Sigmoid colon (tissue), 7 donors: ENCODE measurements at regions of chr5 and their contacts with region 1.

Region 1: DNA sequence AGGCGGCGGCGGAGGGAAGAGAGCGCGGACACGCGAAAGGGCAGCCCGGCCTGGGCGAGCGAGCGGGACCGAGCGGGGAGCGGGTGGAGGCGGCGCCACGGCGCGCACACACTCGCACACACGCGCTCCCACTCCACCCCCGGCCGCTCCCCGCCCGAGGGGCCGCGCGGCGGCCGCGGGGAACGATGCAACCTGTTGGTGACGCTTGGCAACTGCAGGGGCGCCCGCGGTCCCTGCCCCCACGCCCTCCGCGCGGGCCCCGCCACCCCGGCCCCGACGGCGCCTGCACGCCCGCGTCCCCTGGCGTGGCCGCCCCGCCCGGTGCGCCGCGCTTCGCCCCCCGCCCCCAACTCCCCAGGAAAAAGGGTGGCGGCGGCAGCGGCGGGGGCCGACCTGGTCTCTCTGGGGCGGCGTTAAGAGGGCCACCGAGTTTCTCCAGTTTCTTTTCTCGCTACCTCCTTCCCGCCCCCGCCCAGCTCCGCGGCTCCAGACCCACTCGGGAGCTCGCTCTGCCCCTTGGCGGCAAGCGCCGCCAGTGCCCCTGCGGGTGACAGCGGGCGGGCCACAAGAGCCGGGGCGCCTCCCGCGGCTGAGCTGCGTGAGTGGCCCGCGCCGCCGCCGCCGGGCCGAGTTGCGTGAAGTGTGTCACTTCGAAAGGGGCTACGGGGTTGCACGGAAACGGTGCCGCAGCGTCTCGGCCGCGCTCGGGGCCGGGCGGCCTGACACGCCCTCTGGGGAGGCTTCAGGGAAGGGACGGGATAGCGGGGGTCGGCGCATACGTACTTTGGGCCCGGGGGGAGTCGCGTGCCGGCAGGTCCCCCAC is at the start of gene NR3C1:
- DNase-seq: peak; percentile 94
- H3K4me3 ChIP-seq: peak within 1 kb of the TSS; percentile 84 to 89 (median 88)
- H3K27ac ChIP-seq: peak within 1 kb of the TSS; percentile 99
- H3K4me1 ChIP-seq: peaks cover 0 to 39% (median 31%) of the 10 kb centered on the region in 4 donors
- H3K27me3 ChIP-seq: no peaks in the 10 kb centered on the region
- CTCF ChIP-seq: peak in 3 of 4 experiments; percentile 33 to 44 (median 38)
- EP300 ChIP-seq: no peak
- POLR2A ChIP-seq: no peak
- total RNA-seq, gene NR3C1: 36.0 to 65.6 (median 49.9) TPM

Region 2: GRCh38 chr5:142769741-142770631 is 633.8 kb before region 1 on chr5 and contains the start of gene ARHGAP26:
- intact Hi-C with region 1: loop called (anchors 10 kb)
- DNase-seq: peak; percentile 99
- H3K4me3 ChIP-seq: peak within 1 kb of the TSS; percentile 61 to 81 (median 68)
- H3K27ac ChIP-seq: peak within 1 kb of the TSS; percentile 86 to 92 (median 90)
- H3K4me1 ChIP-seq: peaks cover 0 to 20% (median 10%) of the 10 kb centered on the region in 4 donors
- H3K27me3 ChIP-seq: no peaks in the 10 kb centered on the region
- CTCF ChIP-seq: peak in 1 of 4 experiments; percentile 38
- EP300 ChIP-seq: no peak
- POLR2A ChIP-seq: peak; percentile 89 to 97
- total RNA-seq, gene ARHGAP26: 13.3 to 25.5 (median 21.7) TPM

Region 3: GRCh38 chr5:143002459-143003328 is 401.1 kb before region 1 on chr5:
- intact Hi-C with region 1: loop called (anchors 5 kb)
- DNase-seq: no peak
- H3K4me3 ChIP-seq: no peak overlapping the region
- H3K27ac ChIP-seq: peak overlapping the region; percentile 14 to 60 (median 48)
- H3K4me1 ChIP-seq: peaks cover 0 to 28% (median 27%) of the 10 kb centered on the region in 4 donors
- H3K27me3 ChIP-seq: no peaks in the 10 kb centered on the region
- CTCF ChIP-seq: peak in 3 of 4 experiments; percentile 34 to 48 (median 43)
- EP300 ChIP-seq: peak in 2 of 4 donors; percentile 23 to 51
- POLR2A ChIP-seq: no peak

Region 4: GRCh38 chr5:143094087-143094521 is 309.7 kb before region 1 on chr5:
- intact Hi-C with region 1: no loop called
- DNase-seq: no peak
- H3K4me3 ChIP-seq: peak overlapping the region in 2 of 4 donors; percentile 22
- H3K27ac ChIP-seq: no peak overlapping the region
- H3K4me1 ChIP-seq: no peaks in the 10 kb centered on the region
- H3K27me3 ChIP-seq: no peaks in the 10 kb centered on the region
- CTCF ChIP-seq: no peak
- EP300 ChIP-seq: no peak
- POLR2A ChIP-seq: no peak

Region 5: DNA sequence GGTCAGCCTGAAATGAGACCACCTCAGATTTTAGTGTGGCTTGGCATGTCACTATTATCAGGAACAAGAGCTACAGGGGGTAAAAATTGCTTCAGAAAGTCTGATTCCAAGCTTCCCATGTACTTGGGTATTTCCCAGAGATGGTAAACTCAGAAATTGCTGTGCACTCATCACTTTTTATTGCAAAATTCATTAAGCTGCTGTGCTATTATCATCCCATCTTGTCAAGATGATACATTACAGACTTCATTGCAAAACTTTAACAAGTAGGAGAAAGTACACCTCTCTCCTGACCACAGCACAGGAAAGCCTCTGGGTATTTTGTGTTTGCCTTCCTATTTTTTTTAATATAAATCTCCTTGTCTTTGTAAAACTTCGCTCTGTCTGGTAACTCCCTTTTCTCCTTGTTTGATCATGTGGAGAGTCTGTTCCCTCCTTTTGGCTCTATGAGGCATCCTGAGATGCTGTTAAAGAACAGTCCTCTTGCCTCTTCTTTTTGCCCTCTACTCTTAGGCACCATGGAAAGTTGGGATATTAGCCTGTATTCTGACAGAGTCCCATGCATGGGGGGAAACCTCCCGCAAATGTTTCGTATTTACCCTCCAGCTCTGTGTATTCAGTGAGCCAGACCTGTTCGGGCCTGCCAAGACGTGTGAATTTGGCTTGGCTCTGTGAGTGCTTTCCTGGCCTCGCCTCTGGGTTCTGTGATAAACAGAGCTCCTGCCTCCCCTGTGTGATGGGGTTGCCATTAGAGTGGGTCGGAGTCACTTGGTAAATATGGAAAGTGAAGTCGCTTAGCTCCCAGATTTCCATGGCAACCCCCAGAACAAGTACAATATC is 261.0 kb before region 1 on chr5:
- intact Hi-C with region 1: loop called (anchors 5 kb)
- DNase-seq: peak; percentile 81
- H3K4me3 ChIP-seq: no peak overlapping the region
- H3K27ac ChIP-seq: peak overlapping the region; percentile 66 to 77 (median 70)
- H3K4me1 ChIP-seq: peaks cover 0 to 45% (median 38%) of the 10 kb centered on the region in 4 donors
- H3K27me3 ChIP-seq: no peaks in the 10 kb centered on the region
- CTCF ChIP-seq: no peak
- EP300 ChIP-seq: peak; percentile 39 to 76 (median 61)
- POLR2A ChIP-seq: no peak

Region 6: DNA sequence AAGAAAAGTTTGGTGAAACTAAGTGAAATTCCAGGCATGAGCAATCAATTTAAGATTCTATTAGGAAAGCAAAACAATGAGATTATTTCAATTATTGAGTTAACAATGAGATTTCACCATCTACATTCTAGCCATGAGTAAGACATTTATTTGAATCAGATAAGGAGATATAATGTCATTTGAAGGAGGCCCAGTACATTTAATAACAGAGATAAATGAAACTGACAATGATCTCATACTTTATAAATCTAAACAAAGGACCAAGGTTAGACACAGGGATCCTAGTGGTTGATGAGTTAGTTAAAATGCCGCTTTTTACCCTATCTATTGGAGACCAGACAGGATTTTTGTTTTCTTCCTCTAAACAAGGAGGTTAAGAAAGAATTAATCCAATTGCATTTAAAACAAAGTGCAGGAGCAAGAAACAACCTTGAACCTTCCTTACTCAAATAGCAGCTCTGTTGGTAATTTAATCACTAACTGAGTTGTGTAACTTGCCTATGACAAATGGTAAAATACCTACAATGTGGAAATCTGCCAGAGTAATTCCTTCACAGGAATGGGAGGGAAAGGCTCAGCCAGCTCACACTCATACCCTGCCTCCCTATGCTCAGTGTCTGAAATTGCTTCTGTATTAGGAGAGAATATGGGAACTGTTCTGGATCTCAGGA is 103.2 kb after region 1 on chr5:
- intact Hi-C with region 1: loop called (anchors 5 kb)
- DNase-seq: no peak
- H3K4me3 ChIP-seq: no peak overlapping the region
- H3K27ac ChIP-seq: peak overlapping the region in 3 of 4 donors; percentile 59 to 65 (median 60)
- H3K4me1 ChIP-seq: peaks cover 0 to 20% (median 14%) of the 10 kb centered on the region in 4 donors
- H3K27me3 ChIP-seq: no peaks in the 10 kb centered on the region
- CTCF ChIP-seq: no peak
- EP300 ChIP-seq: no peak
- POLR2A ChIP-seq: no peak

Region 7: GRCh38 chr5:143796753-143797152 is 392.9 kb after region 1 on chr5:
- intact Hi-C with region 1: no loop called
- DNase-seq: no peak
- H3K4me3 ChIP-seq: no peak overlapping the region
- H3K27ac ChIP-seq: no peak overlapping the region
- H3K4me1 ChIP-seq: no peaks in the 10 kb centered on the region
- H3K27me3 ChIP-seq: no peaks in the 10 kb centered on the region
- CTCF ChIP-seq: no peak
- EP300 ChIP-seq: no peak
- POLR2A ChIP-seq: no peak

Region 8: DNA sequence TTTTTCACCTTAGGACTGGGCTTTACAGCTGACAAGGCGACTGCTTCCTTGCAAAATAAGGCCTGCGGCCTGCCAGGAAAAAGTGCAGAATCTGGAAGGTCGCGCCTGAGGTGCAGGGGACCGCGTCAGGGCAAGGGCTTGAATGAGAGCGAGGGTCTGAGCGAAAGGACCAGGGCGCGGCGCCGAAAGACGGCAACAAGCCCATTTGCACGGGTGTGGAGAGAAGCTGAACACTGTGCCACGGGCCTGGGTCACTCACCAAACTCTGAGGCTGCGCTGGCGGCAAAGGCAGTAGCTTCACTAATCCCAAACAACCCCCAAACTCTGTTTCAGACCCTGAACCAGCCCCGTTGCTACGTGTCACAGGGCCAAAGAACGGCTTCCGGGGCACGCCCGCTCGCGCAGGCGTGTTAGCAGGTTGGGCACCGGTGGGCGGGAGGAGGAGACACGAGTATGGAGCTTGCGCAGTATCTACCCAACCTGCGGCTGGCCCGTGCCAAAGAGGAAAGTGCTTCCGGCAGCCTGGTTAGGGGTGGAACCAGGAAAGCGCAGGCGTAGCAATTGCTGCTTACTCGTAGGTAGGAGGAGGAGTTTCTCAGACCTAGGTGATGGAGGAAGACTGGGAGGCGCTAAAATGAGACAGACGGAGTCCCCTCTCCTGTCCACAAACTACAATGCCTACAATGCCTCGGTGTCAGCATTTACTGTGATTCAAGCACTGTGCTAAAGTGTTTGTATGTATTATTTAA is 766.6 kb after region 1 on chr5 and contains the starts of genes KCTD16 and YIPF5:
- intact Hi-C with region 1: loop called (anchors 10 kb)
- DNase-seq: peak; percentile 97
- H3K4me3 ChIP-seq: peak within 1 kb of the TSS; percentile 61 to 89 (median 68)
- H3K27ac ChIP-seq: peak within 1 kb of the TSS; percentile 68 to 82 (median 74)
- H3K4me1 ChIP-seq: peaks cover 0 to 32% (median 19%) of the 10 kb centered on the region in 4 donors
- H3K27me3 ChIP-seq: peaks cover 0 to 3% (median 0%) of the 10 kb centered on the region in 3 donors
- CTCF ChIP-seq: no peak
- EP300 ChIP-seq: peak in 1 of 4 donors; percentile 43
- POLR2A ChIP-seq: no peak
- total RNA-seq, gene KCTD16: under 0.01 to 0.71 (median 0.22) TPM
- total RNA-seq, gene YIPF5: 35.2 to 44.6 (median 39.6) TPM